MCF 10A (cell line): ENCODE measurements at regions of chr16 and their contacts with region 1.

Region 1: GRCh38 chr16:66977341-66978113 is 10.9 kb upstream of the CES4A start:
- DNase-seq: peak; percentile 84
- H3K4me3 Mint-ChIP-seq: no peak overlapping the region
- H3K27ac Mint-ChIP-seq: no peak overlapping the region
- H3K4me1 Mint-ChIP-seq: peaks cover 5% of the 10 kb centered on the region
- H3K27me3 Mint-ChIP-seq: no peaks in the 10 kb centered on the region
- CTCF ChIP-seq: peak; percentile 97

Region 2: GRCh38 chr16:66954097-66954659 is 23.3 kb before region 1 on chr16:
- CTCF ChIA-PET with region 1: interaction called, 30 read pairs
- POLR2A ChIA-PET with region 1: no interaction called
- intact Hi-C with region 1: loop called (anchors 1 kb)
- DNase-seq: peak; percentile 88
- H3K4me3 Mint-ChIP-seq: peak overlapping the region; percentile 51
- H3K27ac Mint-ChIP-seq: peak overlapping the region; percentile 70
- H3K4me1 Mint-ChIP-seq: peaks cover 17% of the 10 kb centered on the region
- H3K27me3 Mint-ChIP-seq: no peaks in the 10 kb centered on the region
- CTCF ChIP-seq: peak; percentile 67

Region 3: DNA sequence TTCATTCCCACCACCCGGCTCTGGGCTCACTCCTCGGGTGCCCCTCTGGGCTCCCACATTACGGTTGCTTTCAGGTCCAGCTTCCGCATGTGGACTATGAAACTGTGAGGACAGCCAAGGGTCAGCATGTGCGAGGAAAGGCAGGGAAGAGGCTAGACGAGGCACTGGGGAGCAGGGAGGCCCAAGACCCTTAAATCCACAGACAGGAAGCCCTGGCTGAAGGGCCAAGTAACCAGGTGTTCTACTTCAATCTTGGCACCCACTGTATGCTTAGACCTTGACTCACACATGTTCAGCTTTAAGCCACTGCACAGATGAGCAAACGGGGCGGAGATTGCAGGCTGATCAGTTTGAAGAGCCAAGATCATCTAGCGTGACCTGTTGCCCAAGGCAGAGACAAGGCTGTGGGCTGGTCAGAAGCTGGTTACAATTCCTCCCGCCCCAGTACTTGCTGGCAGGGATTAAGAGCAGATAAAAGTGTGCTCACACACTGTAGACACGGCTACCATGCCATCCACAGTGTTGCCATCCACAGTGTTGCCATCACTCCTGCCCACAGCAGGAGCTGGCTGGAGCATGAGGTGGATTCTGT is 10.8 kb after region 1 on chr16 and contains the start of gene CES4A:
- CTCF ChIA-PET with region 1: interaction called, 15 read pairs
- POLR2A ChIA-PET with region 1: no interaction called
- intact Hi-C with region 1: no loop called
- DNase-seq: peak; percentile 87
- H3K4me3 Mint-ChIP-seq: no peak within 1 kb of the TSS
- H3K27ac Mint-ChIP-seq: peak within 1 kb of the TSS; percentile 76
- H3K4me1 Mint-ChIP-seq: peaks cover 16% of the 10 kb centered on the region
- H3K27me3 Mint-ChIP-seq: no peaks in the 10 kb centered on the region
- CTCF ChIP-seq: no peak
- total RNA-seq, gene CES4A: 5.1 and 6.6 TPM in 2 replicates

Region 4: DNA sequence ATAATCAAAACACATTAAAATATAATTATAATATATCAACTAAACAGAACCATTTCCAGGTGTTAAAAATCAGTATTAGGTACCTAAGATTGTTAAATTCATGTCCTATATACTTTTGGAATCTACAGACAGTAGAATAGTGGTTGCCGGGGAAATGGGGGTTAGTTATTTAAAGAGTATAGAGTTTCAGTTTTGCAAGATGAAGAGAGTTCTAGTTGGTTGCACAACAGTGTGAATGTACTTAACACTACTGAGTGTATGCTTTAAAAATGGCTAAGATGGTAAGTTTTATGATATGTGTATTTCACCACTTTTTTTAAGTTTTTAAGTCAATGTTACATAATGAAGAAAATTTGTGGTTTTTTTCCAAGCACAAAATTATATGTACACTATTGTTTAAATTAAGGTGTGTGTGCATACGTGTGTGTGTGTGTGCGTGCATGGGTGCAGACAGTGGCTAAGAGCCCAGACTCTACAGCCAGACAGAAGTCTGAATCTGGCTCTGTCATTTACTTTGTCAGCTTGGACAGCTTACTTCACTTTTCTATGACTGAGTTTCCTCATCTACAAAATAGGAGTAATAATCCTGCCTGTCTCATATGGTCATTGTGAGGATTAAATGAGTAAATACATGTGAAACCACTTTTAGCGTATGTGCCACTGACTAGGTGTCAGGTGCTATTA is 107.0 kb after region 1 on chr16:
- CTCF ChIA-PET with region 1: no interaction called
- POLR2A ChIA-PET with region 1: no interaction called
- intact Hi-C with region 1: no loop called
- DNase-seq: peak; percentile 24
- H3K4me3 Mint-ChIP-seq: no peak overlapping the region
- H3K27ac Mint-ChIP-seq: no peak overlapping the region
- H3K4me1 Mint-ChIP-seq: no peaks in the 10 kb centered on the region
- H3K27me3 Mint-ChIP-seq: no peaks in the 10 kb centered on the region
- CTCF ChIP-seq: no peak

Region 5: DNA sequence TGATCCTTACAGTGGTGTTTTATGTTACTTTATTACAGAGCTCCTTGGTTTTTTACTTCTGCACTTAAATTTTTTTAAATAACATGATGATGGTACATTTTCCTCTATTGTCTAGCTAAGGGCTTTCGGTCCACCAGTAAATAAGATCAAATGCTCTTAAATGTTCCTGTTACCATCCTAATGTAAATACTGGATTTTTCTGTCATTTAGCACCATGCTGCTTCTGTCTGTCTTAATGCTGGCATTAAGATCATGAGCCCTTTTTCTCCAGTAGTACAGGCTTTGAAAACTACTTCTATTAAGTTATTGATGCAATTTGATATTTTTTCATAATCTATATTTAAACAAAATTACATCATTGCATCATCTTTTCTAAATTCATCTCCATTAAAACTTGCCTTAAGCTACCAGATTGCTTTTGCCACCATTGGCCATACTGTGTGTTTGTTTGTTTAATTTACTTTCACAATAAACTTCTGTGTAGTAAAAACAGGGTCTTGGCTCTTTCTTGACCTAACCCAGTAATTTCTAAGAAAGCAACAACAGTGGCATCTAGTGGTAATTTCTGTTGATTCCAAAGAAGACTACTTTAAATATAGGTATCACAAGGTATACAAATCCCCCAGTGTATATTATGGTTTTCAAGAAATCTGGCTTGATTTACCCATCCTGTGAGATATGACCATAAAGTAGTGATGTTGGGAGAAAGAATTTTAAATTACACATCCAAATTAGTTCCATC is 123.2 kb after region 1 on chr16:
- CTCF ChIA-PET with region 1: interaction called, 45 read pairs
- POLR2A ChIA-PET with region 1: no interaction called
- intact Hi-C with region 1: loop called (anchors 1 kb)
- DNase-seq: no peak
- H3K4me3 Mint-ChIP-seq: no peak overlapping the region
- H3K27ac Mint-ChIP-seq: no peak overlapping the region
- H3K4me1 Mint-ChIP-seq: peaks cover 4% of the 10 kb centered on the region
- H3K27me3 Mint-ChIP-seq: no peaks in the 10 kb centered on the region
- CTCF ChIP-seq: peak; percentile 24

Region 6: GRCh38 chr16:67183627-67184328 is 206.3 kb after region 1 on chr16 and contains the start of gene MATCAP1:
- CTCF ChIA-PET with region 1: interaction called, 10 read pairs
- POLR2A ChIA-PET with region 1: no interaction called
- intact Hi-C with region 1: loop called (anchors 2 kb)
- DNase-seq: peak; percentile 98
- H3K4me3 Mint-ChIP-seq: no peak within 1 kb of the TSS
- H3K27ac Mint-ChIP-seq: no peak within 1 kb of the TSS
- H3K4me1 Mint-ChIP-seq: peaks cover 10% of the 10 kb centered on the region
- H3K27me3 Mint-ChIP-seq: no peaks in the 10 kb centered on the region
- CTCF ChIP-seq: no peak
- total RNA-seq, gene MATCAP1: 18.1 and 18.7 TPM in 2 replicates